Left colon (tissue), 2 donors: ENCODE measurements at regions of chr11 and their contacts with region 1.

Region 1: GRCh38 chr11:33172996-33173395 is 11.7 kb upstream of the CSTF3 start:
- DNase-seq: no peak
- ATAC-seq: no peak

Region 2: GRCh38 chr11:33027846-33028536 is 145.0 kb before region 1 on chr11:
- intact Hi-C with region 1: no loop called
- DNase-seq: no peak
- ATAC-seq: no peak

Region 3: DNA sequence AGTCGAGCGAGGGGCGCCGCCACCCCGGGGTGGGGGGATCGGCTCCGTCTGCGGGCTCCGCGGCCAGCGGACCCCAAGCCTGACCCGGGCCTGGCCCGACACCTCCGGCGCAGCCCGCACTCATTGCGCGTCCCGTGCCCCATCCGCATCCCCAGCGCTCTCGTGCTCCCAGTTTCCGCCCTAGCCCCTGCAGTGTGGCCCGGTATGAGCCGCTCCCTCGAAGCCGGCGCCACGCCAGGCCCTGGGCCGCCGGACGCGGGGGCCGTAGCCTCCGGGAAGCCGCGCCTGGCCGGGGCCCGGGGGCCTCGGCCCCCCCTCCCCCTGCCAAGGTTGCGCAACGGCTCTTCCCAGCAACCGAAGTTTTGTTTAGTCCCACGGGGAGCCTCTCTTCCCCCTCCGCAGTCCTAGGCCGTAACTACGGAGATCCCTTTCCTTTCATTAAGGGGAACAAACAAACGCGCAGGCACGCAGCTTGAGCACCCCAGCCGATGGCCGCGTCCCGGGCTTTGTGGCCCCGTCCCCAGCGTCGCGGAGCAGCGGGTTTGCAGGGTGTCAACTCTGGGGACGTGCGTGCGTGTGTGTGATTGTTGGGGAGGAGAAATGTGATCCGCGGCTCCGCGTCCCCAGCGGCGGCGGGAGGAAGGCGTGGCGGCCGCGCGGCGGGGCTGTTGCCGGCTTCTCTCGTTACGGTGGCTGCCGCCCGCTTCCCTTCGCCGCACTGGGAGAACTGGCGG is 85.1 kb after region 1 on chr11:
- intact Hi-C with region 1: loop called in 1 of 2 experiments (anchors 5 kb)
- DNase-seq: peak; percentile 80
- ATAC-seq: peak; percentile 65

Region 4: DNA sequence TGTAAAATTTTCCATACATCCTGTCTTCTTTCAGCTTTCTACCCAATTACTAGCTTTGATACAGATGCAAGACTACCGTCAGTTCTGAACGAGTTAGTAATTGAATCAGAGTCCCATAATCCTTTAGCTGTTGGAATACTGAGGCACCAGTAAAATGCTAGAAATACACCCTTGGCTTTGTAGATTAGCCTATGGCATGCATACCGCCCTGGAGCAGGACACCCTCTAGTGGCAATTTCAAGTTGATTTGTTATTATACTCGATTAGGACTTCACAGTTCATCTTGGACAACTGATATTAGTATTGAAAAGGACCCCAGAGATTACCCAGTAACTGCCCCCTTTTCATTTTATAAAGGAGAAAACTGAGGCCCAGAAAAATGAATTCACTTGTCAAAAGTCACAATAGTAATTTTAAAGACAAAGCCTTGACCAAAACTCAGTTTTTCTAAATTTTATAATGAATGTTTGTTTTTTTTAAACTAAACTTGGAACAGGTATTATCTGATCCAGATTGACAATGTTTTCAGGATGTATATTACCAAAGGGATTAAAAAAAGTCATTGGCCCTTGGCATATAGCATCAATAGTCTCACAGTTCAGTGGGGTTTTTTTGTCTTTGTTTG is 156.8 kb after region 1 on chr11:
- intact Hi-C with region 1: loop called in 1 of 2 experiments (anchors 5 kb)
- DNase-seq: peak in 1 of 2 donors; percentile 39
- ATAC-seq: peak; percentile 96

Region 5: DNA sequence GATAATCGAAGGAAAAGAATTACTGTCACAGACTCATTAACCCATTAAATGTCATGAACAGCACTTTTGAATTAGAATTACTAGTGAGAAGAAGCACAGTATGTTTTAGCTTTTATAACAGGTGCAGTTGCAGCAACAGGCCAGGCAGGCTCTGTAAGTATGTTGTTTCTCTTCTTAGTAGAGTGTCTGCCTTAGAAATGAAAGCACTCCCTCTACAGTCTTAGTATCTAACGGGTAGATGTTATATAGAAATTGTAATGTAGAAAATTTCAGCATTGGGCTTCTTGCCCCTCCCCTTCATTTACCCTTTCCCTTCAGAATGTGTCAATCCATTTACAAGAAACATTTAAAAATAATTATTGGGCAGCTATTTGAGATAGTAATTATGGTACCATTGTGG is 171.6 kb after region 1 on chr11:
- intact Hi-C with region 1: loop called in 1 of 2 experiments (anchors 5 kb)
- DNase-seq: no peak
- ATAC-seq: no peak